GM10248 (cell line): ENCODE measurements at regions of chr12 and their contacts with region 1.

Region 1: DNA sequence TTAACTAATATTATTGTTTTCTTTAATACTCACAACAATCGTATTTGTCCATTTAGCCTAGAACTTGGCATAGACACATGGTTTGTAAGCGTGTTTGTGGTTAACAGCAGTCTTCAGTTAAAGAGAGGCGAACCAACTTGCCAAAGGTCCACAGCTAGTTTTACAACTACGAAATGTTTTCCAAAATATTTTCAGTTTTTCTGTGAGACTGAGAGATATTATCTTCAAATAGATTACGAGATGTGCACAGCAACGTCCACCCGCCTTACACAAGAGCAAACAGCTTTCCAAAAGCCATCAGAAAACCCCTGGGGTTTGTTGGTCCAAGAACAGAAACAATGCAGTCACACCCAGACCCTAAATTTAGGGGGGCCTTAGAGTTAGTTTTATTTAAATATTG is 58.6 kb upstream of the RASSF3 start:
- DNase-seq: no peak
- CTCF ChIP-seq: no peak

Region 2: DNA sequence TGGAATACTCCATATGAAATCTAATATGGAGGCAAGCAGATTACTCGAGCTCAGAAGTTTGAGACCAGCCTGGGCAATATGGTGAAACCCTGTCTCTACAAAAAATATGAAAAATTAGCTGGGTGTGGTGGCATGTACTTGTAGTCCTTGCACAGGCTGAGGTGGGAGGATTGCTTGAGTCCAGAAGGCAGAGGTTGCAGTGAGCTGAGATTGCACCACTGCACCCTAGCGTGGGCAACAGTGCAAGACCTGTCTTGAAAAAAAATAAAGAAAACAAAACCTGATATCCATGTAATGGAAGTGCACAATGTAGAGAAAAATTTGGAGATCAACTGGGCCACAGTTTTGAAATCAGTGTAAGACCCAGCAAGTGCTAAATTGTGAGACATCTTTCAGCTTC is 178.5 kb before region 1 on chr12:
- CTCF ChIA-PET with region 1: no interaction called
- POLR2A ChIA-PET with region 1: no interaction called
- DNase-seq: no peak
- CTCF ChIP-seq: no peak

Region 3: GRCh38 chr12:64445490-64445889 is 106.2 kb before region 1 on chr12:
- CTCF ChIA-PET with region 1: no interaction called
- POLR2A ChIA-PET with region 1: no interaction called
- DNase-seq: no peak
- CTCF ChIP-seq: no peak

Region 4: GRCh38 chr12:64459394-64459891 is 92.3 kb before region 1 on chr12:
- CTCF ChIA-PET with region 1: no interaction called
- POLR2A ChIA-PET with region 1: no interaction called
- DNase-seq: peak; percentile 17
- CTCF ChIP-seq: no peak

Region 5: DNA sequence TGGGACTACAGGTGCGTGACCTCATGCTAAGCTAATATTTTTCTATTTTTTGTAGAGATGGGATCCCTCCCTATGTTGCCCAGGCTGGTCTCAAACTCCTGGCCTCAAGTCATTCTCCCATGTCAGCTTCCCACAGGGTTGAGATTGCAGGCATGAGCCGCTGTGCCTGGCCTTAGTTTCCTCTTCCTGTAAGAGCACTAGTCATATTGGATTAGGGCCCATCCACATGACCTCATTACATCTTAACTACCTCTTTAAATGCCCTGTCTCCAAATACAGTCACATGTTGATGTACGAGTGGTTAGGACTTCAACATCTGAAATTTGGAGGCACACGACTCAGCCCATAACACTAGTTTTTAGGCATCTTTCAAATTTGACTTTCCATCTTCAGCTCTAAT is 13.6 kb before region 1 on chr12:
- CTCF ChIA-PET with region 1: interaction called, 21 read pairs
- POLR2A ChIA-PET with region 1: no interaction called
- DNase-seq: no peak
- CTCF ChIP-seq: no peak

Region 6: DNA sequence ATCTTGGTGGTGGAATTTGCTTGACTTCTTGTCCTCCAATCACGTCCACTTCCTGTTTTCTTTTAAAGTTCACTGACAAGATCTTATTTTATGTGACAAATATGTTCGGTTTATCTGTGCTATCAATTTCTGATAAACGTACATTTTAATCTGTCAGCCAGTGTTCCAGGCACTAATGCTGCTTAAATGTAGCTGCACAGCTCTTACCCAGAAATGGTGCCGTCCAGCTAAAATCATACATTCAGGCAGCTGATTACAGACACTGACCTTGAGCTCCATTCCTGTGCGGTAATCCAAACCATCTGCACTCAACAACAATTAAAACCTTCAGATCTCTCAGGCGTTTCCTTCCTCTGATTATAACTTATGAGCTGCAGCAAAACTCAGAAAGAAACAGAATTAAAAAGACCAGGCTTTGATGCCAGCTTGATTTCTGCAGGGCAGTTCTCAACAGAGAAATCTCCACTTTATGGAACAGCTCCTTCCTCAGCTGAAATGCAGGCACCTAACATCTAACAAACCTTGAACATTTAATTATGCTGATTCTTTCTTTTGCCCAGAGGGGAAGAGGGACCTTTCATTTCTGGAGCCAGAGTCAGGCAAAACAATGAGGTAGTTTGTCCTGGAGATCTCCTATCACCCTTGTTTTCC is 32.2 kb after region 1 on chr12:
- CTCF ChIA-PET with region 1: interaction called, 14 read pairs
- POLR2A ChIA-PET with region 1: no interaction called
- DNase-seq: no peak
- CTCF ChIP-seq: no peak

Region 7: GRCh38 chr12:64679487-64679983 is 127.8 kb after region 1 on chr12:
- CTCF ChIA-PET with region 1: interaction called, 12 read pairs
- POLR2A ChIA-PET with region 1: no interaction called
- DNase-seq: no peak
- CTCF ChIP-seq: no peak

Region 8: GRCh38 chr12:64696080-64696741 is 144.5 kb after region 1 on chr12:
- CTCF ChIA-PET with region 1: interaction called, 172 read pairs
- POLR2A ChIA-PET with region 1: no interaction called
- DNase-seq: no peak
- CTCF ChIP-seq: no peak

Region 9: DNA sequence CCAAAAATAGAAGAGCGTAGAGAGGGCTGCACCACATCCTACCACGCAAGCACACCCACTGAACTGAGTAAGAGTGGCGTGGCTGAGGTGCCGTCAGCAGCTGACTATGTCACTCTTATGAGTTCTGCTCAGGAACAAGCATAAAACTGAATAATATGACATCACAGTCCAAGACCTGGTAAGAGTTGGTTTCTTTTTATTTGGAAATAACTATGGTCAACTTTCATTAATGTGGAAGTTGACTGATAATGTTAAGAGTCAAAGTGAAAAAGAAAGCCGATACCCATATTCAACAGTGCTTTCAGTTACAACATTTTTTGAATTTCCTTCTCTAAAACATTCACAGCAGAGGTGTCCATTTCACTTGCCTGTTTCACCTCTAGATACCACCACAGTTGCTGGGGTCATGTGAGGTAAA is 162.9 kb after region 1 on chr12:
- CTCF ChIA-PET with region 1: interaction called, 10 read pairs
- POLR2A ChIA-PET with region 1: no interaction called
- DNase-seq: peak; percentile 26
- CTCF ChIP-seq: no peak

Region 10: GRCh38 chr12:64826234-64826633 is 274.5 kb after region 1 on chr12:
- CTCF ChIA-PET with region 1: no interaction called
- POLR2A ChIA-PET with region 1: no interaction called
- DNase-seq: peak; percentile 50
- CTCF ChIP-seq: no peak